Right cardiac atrium (tissue), 5 donors: ENCODE measurements at regions of chr15 and their contacts with region 1.

Region 1: GRCh38 chr15:74156678-74157411 is 16.7 kb upstream of the ISLR start:
- DNase-seq: peak in 2 of 3 donors; percentile 55 to 58
- ATAC-seq: peak; percentile 80 to 83
- H3K4me3 ChIP-seq: no peak overlapping the region
- H3K27ac ChIP-seq: peak overlapping the region; percentile 19
- H3K4me1 ChIP-seq: peaks cover 20% of the 10 kb centered on the region
- H3K27me3 ChIP-seq: no peaks in the 10 kb centered on the region

Region 2: DNA sequence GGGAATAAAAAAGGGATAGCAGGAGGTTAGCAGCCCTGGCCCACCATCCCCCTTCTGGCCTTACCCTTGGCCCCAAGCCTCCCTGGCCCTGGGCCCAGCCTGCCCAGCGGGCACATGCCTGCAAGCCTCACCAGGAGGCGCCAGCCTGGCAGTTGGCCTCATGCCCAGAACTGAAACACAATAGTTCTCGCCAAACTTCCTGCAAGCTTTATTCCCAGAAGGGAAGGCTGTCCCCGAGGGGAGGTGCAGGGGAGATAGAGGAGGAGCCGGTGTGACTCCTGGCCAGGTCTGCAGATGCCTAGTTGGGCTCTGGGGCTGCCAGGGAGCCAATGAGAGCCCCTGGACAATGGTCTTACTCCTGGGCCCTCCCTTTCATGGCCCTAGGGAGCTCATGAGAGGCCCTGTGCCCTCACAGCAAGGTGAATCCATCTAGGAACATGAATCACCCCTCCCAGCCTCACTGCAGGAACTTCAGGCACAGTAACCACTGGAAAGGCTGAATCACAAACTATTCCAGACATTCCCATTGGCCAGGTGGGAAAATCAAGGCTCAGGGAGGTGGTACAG is 83.2 kb after region 1 on chr15:
- intact Hi-C with region 1: loop called in 1 of 4 experiments (anchors 10 kb)
- DNase-seq: peak; percentile 85 to 94 (median 93)
- ATAC-seq: peak; percentile 83 to 84
- H3K4me3 ChIP-seq: no peak overlapping the region
- H3K27ac ChIP-seq: peak overlapping the region; percentile 75
- H3K4me1 ChIP-seq: peaks cover 19% of the 10 kb centered on the region
- H3K27me3 ChIP-seq: no peaks in the 10 kb centered on the region

Region 3: DNA sequence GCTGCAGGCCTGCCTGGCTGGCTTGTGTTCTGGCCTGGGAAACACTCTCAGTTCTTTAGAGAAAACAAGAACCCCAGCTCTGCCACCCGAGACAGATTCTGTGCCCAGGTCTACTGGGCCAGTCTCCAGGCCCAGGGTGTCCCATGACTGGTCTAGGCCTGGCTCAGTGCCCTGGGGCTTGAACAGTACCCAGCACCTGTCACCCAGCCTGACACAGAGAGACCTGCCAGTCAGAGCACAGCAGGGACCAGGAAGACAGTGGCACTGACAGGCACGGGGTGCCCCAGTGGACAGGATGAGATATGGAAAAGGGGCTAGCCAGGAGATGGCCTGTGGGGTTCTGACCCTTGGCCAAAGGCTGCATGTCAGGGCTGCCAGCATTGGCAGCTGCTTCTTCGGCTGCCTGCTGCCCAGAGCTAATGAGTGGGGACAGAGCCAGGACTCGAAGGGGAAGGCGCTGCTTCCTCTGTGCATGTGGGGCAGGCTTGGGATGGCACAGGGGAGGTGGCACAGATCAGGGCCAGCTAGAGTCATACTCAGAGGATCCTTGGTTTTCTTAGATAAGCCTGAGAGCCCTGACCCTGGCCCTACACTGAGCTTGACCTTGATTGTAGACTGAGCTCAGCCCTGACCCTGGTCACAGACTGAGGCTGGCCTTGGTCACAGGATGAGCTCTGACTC is 94.4 kb after region 1 on chr15:
- intact Hi-C with region 1: loop called in 1 of 4 experiments (anchors 5 kb)
- DNase-seq: peak; percentile 72 to 90 (median 90)
- ATAC-seq: peak; percentile 90 to 95
- H3K4me3 ChIP-seq: no peak overlapping the region
- H3K27ac ChIP-seq: peak overlapping the region; percentile 84
- H3K4me1 ChIP-seq: peaks cover 8% of the 10 kb centered on the region
- H3K27me3 ChIP-seq: no peaks in the 10 kb centered on the region